Activated naive CD4-positive, alpha-beta T cell treated with anti-CD3 and anti-CD28 coated beads for 36 hours (primary cell): ENCODE measurements at regions of chr11 and their contacts with region 1.

Region 1: DNA sequence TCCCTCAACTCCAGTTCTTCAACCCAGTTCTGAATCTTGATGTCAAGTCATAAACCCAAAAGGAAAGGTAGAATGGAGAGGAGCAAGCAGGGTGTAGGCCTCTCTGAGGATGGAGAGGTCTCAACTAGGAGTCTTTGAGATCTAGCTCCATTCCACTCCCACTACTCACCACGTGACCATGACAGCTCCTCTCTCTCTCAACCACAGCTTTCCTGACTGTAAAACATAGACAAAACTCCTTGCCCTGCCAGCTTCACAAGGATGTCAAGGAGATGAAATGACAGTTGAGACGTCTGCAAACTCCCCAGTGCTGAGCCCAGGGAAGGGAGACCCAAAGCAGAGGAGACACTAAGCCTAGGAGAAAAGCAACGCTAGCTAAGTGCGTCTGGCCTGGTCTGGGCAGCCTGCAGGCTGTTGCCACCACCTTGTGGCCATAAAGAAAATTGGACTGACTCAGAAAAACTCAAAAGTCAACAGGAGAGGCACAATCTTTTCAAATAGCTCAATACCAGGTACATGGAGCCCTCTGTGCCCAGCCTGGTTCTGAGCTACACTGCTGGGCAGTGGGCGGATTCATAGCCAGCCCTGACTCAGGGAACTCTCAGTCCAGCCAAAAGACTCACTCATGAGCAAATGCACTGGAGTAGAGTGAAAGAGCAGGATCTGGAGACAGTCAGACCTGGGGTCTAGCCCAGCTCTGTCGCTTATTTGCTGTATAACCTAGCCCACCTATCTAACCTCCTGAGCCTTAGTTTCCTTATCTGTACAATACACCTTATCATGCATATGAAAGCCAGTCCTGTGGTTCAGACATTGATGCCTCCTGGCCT is 3.4 kb downstream of the CLPB start:
- DNase-seq: peak; percentile 49
- H3K4me3 Mint-ChIP-seq: no peak overlapping the region
- H3K27ac Mint-ChIP-seq: no peak overlapping the region
- H3K4me1 Mint-ChIP-seq: peaks cover 30% of the 10 kb centered on the region
- H3K27me3 Mint-ChIP-seq: no peaks in the 10 kb centered on the region

Region 2: DNA sequence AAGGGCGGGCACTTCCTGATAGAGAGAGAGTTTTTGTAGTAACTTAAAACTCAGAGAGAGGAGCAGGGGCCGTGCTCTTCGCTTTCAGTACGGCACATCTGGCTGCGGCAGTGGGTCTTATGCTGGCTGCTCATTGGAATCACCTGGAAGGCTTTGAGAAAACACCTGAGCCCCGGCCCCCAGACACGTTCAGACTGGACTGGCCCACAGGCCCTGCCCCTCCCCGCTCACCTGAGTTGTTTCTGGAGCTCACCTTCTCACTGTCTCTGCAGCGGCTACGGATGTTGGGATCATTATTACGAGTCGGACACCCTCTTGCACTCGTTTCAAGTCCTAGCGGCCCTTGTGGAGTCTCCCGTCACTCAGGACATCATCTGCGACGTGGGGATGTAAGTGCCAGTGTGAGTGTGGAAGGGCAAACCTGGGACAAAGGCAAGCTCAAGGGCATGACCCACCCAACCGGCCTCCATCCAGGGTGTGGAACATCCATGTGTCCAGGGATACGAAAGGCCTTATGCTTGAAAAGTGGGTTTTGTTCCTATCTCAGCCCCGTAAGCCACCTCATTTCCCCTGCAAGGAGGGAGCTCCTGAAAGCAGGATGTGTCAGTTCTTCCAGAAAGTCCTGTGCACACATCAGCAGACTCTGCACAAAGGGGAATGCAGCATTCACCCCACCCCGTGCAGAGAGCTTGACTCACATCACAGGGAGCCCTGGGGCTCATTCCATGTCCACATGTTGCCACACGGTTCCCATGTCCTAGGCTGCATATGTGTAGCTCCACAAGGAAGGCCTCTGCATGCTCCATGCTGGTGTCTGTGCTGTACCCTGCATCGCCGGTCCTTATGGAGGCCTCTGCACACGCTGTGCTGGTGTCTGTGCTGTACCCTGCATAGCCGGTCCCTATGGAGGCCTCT is 972.5 kb before region 1 on chr11:
- CTCF ChIA-PET with region 1: no interaction called
- intact Hi-C with region 1: no loop called
- DNase-seq: no peak
- H3K4me3 Mint-ChIP-seq: no peak overlapping the region
- H3K27ac Mint-ChIP-seq: no peak overlapping the region
- H3K4me1 Mint-ChIP-seq: peaks cover 22% of the 10 kb centered on the region
- H3K27me3 Mint-ChIP-seq: no peaks in the 10 kb centered on the region

Region 3: GRCh38 chr11:71977743-71978418 is 453.1 kb before region 1 on chr11:
- CTCF ChIA-PET with region 1: interaction called, 7 read pairs
- intact Hi-C with region 1: loop called (anchors 5 kb)
- DNase-seq: peak; percentile 72
- H3K4me3 Mint-ChIP-seq: no peak overlapping the region
- H3K27ac Mint-ChIP-seq: no peak overlapping the region
- H3K4me1 Mint-ChIP-seq: no peaks in the 10 kb centered on the region
- H3K27me3 Mint-ChIP-seq: no peaks in the 10 kb centered on the region

Region 4: GRCh38 chr11:72080256-72080974 is 350.5 kb before region 1 on chr11 and contains the starts of genes LRRC51 and NUMA1:
- CTCF ChIA-PET with region 1: interaction called, 3 read pairs
- intact Hi-C with region 1: loop called (anchors 1 kb)
- DNase-seq: peak; percentile 100
- H3K4me3 Mint-ChIP-seq: peak within 1 kb of the TSS; percentile 88
- H3K27ac Mint-ChIP-seq: peak within 1 kb of the TSS; percentile 90
- H3K4me1 Mint-ChIP-seq: peaks cover 37% of the 10 kb centered on the region
- H3K27me3 Mint-ChIP-seq: no peaks in the 10 kb centered on the region
- total RNA-seq, gene LRRC51: 6.8 to 8.3 TPM
- total RNA-seq, gene NUMA1: 189 to 194 TPM

Region 5: GRCh38 chr11:72141066-72141465 is 289.9 kb before region 1 on chr11:
- CTCF ChIA-PET with region 1: interaction called, 12 read pairs
- intact Hi-C with region 1: no loop called
- DNase-seq: no peak
- H3K4me3 Mint-ChIP-seq: no peak overlapping the region
- H3K27ac Mint-ChIP-seq: no peak overlapping the region
- H3K4me1 Mint-ChIP-seq: peaks cover 1% of the 10 kb centered on the region
- H3K27me3 Mint-ChIP-seq: no peaks in the 10 kb centered on the region

Region 6: GRCh38 chr11:72238040-72238450 is 192.9 kb before region 1 on chr11:
- CTCF ChIA-PET with region 1: interaction called, 9 read pairs
- intact Hi-C with region 1: loop called (anchors 5 kb)
- DNase-seq: peak; percentile 66
- H3K4me3 Mint-ChIP-seq: no peak overlapping the region
- H3K27ac Mint-ChIP-seq: no peak overlapping the region
- H3K4me1 Mint-ChIP-seq: peaks cover 12% of the 10 kb centered on the region
- H3K27me3 Mint-ChIP-seq: peaks cover 36% of the 10 kb centered on the region

Region 7: GRCh38 chr11:72263361-72263760 is 167.6 kb before region 1 on chr11:
- CTCF ChIA-PET with region 1: no interaction called
- intact Hi-C with region 1: no loop called
- DNase-seq: no peak
- H3K4me3 Mint-ChIP-seq: no peak overlapping the region
- H3K27ac Mint-ChIP-seq: no peak overlapping the region
- H3K4me1 Mint-ChIP-seq: no peaks in the 10 kb centered on the region
- H3K27me3 Mint-ChIP-seq: peaks cover 9% of the 10 kb centered on the region

Region 8: DNA sequence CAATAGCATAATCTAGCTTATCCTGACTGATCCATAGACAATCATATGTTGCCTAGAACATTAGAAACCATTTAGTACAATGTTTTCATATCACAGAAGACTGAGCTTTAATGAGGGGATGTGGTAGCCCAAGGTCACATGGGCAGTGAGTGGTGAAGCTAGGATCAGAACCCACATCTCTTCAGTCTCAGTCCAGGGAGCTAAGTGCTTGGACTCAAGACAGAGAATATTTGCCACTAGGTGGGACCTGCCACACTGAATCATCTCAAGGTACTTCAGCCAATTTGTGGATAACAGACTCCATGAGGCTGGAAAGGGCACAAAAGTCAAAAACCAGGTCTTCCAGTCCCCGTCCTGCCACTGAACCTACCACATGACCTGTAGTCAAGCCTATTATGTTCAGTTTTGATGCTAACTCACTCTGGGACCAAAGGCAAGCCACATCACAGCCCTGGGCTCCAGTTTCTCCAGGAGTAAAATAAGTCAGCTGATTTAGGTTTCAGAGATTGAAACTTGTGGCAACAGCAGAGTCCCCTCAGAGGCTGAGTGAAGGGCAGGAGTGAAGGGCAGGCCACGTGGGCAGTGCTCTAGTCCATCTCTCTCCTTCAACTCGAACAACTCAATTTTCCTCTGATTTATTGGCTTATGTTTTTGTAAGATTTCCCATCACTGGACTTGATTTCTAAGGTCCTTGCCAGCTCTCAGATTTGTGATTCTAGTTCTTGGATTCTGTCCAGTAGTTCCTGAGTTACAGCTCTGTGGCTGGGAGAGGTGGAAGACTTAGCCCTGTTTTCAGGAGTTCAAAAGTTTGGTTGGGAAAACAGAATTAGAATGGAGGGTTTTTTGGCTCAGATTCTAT is 102.4 kb before region 1 on chr11:
- CTCF ChIA-PET with region 1: interaction called, 16 read pairs
- intact Hi-C with region 1: loop called (anchors 5 kb)
- DNase-seq: no peak
- H3K4me3 Mint-ChIP-seq: no peak overlapping the region
- H3K27ac Mint-ChIP-seq: no peak overlapping the region
- H3K4me1 Mint-ChIP-seq: peaks cover 14% of the 10 kb centered on the region
- H3K27me3 Mint-ChIP-seq: no peaks in the 10 kb centered on the region

Region 9: DNA sequence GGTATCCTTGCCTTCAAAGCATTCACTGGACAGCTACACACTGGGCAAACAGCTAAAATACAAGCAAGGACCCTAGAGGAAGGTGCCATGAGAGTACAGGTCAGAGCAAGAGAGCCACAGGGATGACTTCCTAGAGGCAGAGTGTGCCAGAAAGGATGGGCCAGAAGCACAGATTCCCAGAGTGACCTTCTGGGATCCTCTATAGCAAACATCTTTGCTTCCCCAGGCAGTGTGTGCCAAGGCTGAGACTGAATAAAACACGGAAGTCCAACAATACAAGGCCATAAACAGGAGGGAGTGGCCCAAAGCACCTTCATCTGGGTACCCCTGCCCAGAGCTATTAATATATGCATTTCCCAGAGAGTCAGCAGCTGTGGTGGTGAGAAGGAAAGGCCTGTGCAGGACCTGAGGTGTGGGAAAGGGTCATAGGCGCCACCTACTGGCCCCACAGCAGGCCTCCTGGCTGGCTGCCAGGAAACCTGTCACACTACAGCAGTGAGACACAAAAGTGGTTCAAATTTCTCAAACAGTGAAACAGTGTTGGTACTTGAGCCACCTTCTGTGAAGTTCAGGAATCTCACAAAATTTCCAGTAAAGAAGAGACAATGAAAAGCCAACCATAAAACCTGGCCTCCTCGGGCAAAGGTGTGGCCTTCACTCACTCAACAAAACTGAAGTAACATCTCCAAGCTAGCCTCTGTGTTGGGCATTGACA is 16.9 kb before region 1 on chr11:
- CTCF ChIA-PET with region 1: interaction called, 58 read pairs
- intact Hi-C with region 1: loop called (anchors 1 kb)
- DNase-seq: peak; percentile 91
- H3K4me3 Mint-ChIP-seq: no peak overlapping the region
- H3K27ac Mint-ChIP-seq: no peak overlapping the region
- H3K4me1 Mint-ChIP-seq: peaks cover 26% of the 10 kb centered on the region
- H3K27me3 Mint-ChIP-seq: no peaks in the 10 kb centered on the region

Region 10: DNA sequence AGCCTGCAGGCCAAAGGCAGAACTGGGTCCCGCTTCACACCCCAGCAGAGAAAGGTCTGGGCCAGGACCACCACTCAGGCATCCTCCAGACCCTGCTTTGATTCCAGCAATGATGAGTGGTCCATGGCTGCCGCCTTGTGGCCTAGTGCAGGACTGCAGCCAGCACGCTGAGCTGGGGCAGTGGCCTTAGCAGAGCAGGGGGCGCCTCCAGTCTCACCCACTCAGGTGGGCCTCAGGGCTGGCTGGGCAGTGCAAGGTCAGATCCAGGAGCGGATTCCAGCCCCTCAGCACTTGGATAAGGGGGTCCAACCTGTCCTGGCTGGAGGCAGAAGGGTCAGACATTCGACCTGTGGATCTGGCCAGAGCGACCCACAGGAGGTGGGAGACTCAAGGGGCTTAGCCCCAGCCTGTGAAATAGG is 252.8 kb after region 1 on chr11:
- CTCF ChIA-PET with region 1: no interaction called
- intact Hi-C with region 1: no loop called
- DNase-seq: peak; percentile 81
- H3K4me3 Mint-ChIP-seq: no peak overlapping the region
- H3K27ac Mint-ChIP-seq: no peak overlapping the region
- H3K4me1 Mint-ChIP-seq: peaks cover 13% of the 10 kb centered on the region
- H3K27me3 Mint-ChIP-seq: no peaks in the 10 kb centered on the region

Region 11: GRCh38 chr11:73307323-73308002 is 876.5 kb after region 1 on chr11:
- CTCF ChIA-PET with region 1: no interaction called
- intact Hi-C with region 1: no loop called
- DNase-seq: peak; percentile 95
- H3K4me3 Mint-ChIP-seq: peak overlapping the region; percentile 76
- H3K27ac Mint-ChIP-seq: no peak overlapping the region
- H3K4me1 Mint-ChIP-seq: peaks cover 6% of the 10 kb centered on the region
- H3K27me3 Mint-ChIP-seq: peaks cover 15% of the 10 kb centered on the region